CD14-positive monocyte (primary cell): ENCODE measurements at regions of chr21 and their contacts with region 1.

Region 1: DNA sequence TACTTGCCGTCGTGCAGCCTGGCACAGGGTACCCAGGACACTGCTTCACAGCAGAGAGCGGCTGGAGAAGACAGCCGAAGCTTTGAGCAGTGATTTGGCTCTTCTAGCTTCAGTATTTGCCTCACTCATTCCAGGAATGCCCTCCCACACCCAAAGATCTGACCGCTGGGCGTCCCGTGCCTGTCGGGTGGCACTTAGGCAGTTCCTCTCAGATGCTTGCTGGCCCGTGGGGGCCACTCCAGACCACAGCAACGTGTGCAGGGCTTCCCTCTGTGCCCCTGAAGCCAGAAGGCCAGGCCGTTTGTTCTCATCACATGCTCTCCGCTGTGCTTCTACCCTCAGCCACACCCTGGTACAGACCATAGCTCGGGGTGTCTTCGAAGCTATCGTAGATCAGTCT is 17.0 kb downstream of the RRP1B start:
- DNase-seq: no peak
- H3K4me3 ChIP-seq: no peak overlapping the region
- H3K4me3 Mint-ChIP-seq: no peak overlapping the region
- H3K27ac ChIP-seq: no peak overlapping the region
- H3K27ac Mint-ChIP-seq: peak overlapping the region in 1 of 7 donors; percentile 58
- H3K4me1 ChIP-seq: no peaks in the 10 kb centered on the region
- H3K4me1 Mint-ChIP-seq: no peaks in the 10 kb centered on the region
- H3K27me3 ChIP-seq: no peaks in the 10 kb centered on the region
- H3K27me3 Mint-ChIP-seq: no peaks in the 10 kb centered on the region
- CTCF ChIP-seq: no peak

Region 2: GRCh38 chr21:43600642-43601402 is 75.6 kb before region 1 on chr21:
- intact Hi-C with region 1: no loop called
- DNase-seq: no peak
- H3K4me3 ChIP-seq: no peak overlapping the region
- H3K4me3 Mint-ChIP-seq: no peak overlapping the region
- H3K27ac ChIP-seq: no peak overlapping the region
- H3K27ac Mint-ChIP-seq: no peak overlapping the region
- H3K4me1 ChIP-seq: peaks cover 24 to 26% of the 10 kb centered on the region in 2 donors
- H3K4me1 Mint-ChIP-seq: no peaks in the 10 kb centered on the region
- H3K27me3 ChIP-seq: no peaks in the 10 kb centered on the region
- H3K27me3 Mint-ChIP-seq: peaks cover 0 to 2% (median 0%) of the 10 kb centered on the region in 3 donors
- CTCF ChIP-seq: no peak

Region 3: DNA sequence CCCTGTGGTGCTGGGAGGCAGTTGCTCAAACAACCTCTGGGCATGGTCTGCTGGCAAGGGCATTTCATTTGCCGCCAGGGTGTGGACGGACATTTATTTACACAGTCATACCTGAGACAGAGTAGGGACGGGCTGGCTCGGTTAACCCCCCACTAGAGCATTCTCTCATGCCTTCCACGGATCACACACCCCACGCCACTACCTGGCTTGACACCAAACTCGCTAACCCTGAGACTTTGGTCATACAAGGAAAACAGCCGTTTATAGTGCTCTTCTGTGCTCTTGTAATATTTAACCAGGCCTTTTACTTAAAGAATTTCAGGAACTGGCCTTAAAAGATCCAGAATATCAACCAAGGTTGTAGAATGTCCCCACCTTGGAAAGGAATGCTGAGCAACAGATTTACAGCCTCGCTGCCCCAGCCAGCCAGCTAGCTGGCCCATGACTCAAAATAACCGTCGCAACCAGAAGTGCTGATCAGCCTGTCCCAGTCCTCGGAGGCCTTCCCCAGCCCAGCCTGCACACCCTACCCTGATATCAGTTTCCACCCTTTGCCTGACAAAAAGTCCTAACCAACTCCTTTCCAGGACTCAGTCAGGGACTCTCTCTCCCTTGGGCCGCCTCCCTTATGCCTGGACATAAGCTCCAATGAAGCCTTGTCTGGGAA is 36.0 kb after region 1 on chr21:
- intact Hi-C with region 1: no loop called
- DNase-seq: no peak
- H3K4me3 ChIP-seq: no peak overlapping the region
- H3K4me3 Mint-ChIP-seq: peak overlapping the region in 1 of 2 donors; percentile 26
- H3K27ac ChIP-seq: no peak overlapping the region
- H3K27ac Mint-ChIP-seq: peak overlapping the region in 2 of 7 donors; percentile 46 to 50
- H3K4me1 ChIP-seq: peaks cover 13 to 15% of the 10 kb centered on the region in 2 donors
- H3K4me1 Mint-ChIP-seq: peaks cover 19% of the 10 kb centered on the region
- H3K27me3 ChIP-seq: peaks cover 0 to 6% of the 10 kb centered on the region in 2 donors
- H3K27me3 Mint-ChIP-seq: peaks cover 16 to 32% (median 25%) of the 10 kb centered on the region in 3 donors
- CTCF ChIP-seq: no peak

Region 4: GRCh38 chr21:43775795-43776430 is 99.5 kb after region 1 on chr21 and contains the start of gene CSTB:
- intact Hi-C with region 1: no loop called
- DNase-seq: peak; percentile 64 to 75 (median 71)
- H3K4me3 ChIP-seq: peak within 1 kb of the TSS; percentile 57 to 97 (median 95)
- H3K4me3 Mint-ChIP-seq: peak within 1 kb of the TSS; percentile 95 to 98
- H3K27ac ChIP-seq: peak within 1 kb of the TSS; percentile 47 to 88
- H3K27ac Mint-ChIP-seq: peak within 1 kb of the TSS; percentile 80 to 90 (median 88)
- H3K4me1 ChIP-seq: peaks cover 34 to 57% of the 10 kb centered on the region in 2 donors
- H3K4me1 Mint-ChIP-seq: peaks cover 46% of the 10 kb centered on the region
- H3K27me3 ChIP-seq: no peaks in the 10 kb centered on the region
- H3K27me3 Mint-ChIP-seq: peaks cover 0 to 3% (median 0%) of the 10 kb centered on the region in 3 donors
- CTCF ChIP-seq: no peak
- polyA plus RNA-seq, gene CSTB: 73.7 to 120 (median 115) TPM

Region 5: DNA sequence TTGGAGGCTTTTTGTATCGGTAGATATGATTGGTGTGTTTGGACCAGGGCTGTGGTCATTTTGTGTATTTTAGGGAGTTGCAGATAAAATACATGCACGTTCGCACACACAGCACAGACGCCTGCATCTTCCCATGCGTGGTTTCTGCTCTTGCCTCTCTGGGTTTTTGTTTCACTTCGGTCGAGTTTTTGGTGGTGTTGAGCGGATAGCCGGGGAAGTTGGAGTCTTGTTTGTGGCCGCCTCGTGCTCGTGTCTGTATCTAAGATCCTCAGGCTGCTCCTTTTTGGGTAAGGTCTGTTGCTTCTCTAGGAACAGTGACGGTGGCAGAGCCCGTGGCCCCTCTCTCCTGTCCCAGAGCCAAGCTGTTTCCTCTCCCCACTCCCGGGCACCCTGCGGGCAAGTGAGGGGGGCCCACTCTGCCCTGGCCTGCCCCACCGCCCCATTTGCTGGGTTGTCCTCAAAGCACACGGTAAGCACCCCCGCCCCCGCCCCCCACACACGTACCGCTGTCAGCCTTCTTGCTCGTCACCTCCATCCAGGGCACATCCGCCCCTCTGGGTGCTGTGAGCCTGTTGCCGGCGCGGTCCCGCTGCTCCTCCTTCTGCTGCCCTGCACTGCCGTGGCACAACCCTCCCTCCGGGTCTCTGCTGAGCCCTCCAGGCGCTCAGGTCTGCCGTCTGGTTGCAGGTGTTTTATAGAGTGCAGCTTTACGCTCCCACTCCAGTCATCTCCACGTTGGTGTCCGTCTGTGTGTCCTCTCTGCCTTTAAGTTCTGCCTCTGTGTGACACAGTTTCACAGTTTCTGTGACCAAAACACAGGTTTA is 240.5 kb after region 1 on chr21:
- intact Hi-C with region 1: loop called in 1 of 2 experiments (anchors 10 kb)
- DNase-seq: no peak
- H3K4me3 ChIP-seq: peak overlapping the region in 1 of 3 experiments; percentile 58
- H3K4me3 Mint-ChIP-seq: peak overlapping the region; percentile 65 to 92
- H3K27ac ChIP-seq: no peak overlapping the region
- H3K27ac Mint-ChIP-seq: peak overlapping the region in 4 of 7 donors; percentile 43 to 72 (median 59)
- H3K4me1 ChIP-seq: peaks cover 21 to 29% of the 10 kb centered on the region in 2 donors
- H3K4me1 Mint-ChIP-seq: peaks cover 45% of the 10 kb centered on the region
- H3K27me3 ChIP-seq: no peaks in the 10 kb centered on the region
- H3K27me3 Mint-ChIP-seq: peaks cover 0 to 12% (median 3%) of the 10 kb centered on the region in 3 donors
- CTCF ChIP-seq: no peak